Activated T-helper 2 cell treated with anti-CD3 and anti-CD28 coated beads, Interferon-gamma antibody, Interleukin-2, Interleukin-4, amounts not matched to agents 10 μg/mL and 5 μg/mL and 100 μg/mL, durations not matched to agents 14 hours and 24 hours and 36 hours (primary cell): ENCODE measurements at regions of chr12 and their contacts with region 1.

Region 1: DNA sequence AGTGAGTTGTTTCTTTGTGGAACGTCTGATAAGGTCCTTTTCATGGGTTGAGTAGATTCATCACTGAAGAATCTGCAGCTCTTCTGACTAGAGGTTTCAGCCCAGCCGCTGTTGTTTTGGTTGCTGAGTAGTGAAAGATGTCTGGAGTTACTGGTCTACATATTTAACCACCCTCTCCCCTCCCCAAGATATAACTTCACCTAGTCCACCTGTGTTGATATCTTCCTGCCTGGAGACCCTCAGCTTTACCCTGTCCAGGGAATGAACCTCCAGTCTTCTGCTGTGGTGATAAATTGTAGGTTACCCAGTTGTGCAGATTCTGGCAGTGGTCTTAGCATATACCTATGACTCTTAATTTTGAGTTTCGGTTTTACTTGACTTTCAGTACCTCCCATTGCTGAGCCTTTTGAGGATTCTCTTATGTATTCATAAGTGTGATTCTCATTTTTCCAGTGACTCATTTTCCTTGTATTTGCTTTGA is 62.9 kb downstream of the CCDC91 start:
- DNase-seq: peak; percentile 11
- H3K4me3 Mint-ChIP-seq: peak overlapping the region; percentile 59
- H3K27ac Mint-ChIP-seq: peak overlapping the region; percentile 92
- H3K4me1 Mint-ChIP-seq: peaks cover 41% of the 10 kb centered on the region
- H3K27me3 Mint-ChIP-seq: peaks cover 2% of the 10 kb centered on the region

Region 2: GRCh38 chr12:27861428-27862167 is 391.6 kb before region 1 on chr12:
- intact Hi-C with region 1: loop called (anchors 1 kb)
- DNase-seq: no peak
- H3K4me3 Mint-ChIP-seq: no peak overlapping the region
- H3K27ac Mint-ChIP-seq: no peak overlapping the region
- H3K4me1 Mint-ChIP-seq: peaks cover 21% of the 10 kb centered on the region
- H3K27me3 Mint-ChIP-seq: peaks cover 7% of the 10 kb centered on the region

Region 3: DNA sequence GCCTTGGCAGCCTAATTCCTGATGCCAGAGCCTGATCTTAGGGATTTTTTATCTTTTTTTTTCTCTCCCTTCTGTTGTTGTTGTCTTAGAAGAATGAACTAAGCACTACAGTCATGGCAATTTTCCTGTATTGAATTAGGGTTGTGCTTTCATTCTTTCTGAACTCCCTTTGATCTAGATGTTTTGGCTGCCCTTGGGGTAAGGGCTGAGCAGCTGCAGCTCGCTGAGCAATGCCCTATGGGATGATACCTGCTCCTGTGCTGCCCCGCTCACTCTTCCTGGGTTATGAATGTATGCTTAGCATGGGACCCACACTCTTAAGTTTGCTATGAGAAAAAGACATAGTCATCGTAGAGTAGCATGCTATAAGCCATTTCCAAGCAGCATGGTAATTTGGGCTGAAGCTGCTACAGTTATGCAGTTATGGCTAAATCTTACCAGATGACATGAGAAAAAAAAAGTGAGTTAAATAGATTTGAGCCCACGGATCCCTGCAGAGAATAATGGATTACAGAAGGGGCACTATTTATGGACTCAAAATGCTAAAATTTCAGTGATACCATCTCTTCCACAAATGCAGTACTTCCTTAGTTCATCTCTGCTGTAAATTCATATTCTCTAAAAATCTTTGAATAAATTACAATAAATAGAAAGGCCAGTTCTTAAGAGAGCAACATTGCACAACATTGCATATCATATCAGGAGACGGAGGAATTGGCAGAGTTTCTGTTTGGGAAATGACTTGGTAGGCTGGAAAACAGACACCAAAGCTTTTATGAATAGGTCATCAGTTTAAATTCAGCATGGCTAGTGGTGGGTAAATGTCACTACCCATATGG is 201.5 kb before region 1 on chr12:
- intact Hi-C with region 1: no loop called
- DNase-seq: no peak
- H3K4me3 Mint-ChIP-seq: no peak overlapping the region
- H3K27ac Mint-ChIP-seq: no peak overlapping the region
- H3K4me1 Mint-ChIP-seq: no peaks in the 10 kb centered on the region
- H3K27me3 Mint-ChIP-seq: no peaks in the 10 kb centered on the region

Region 4: GRCh38 chr12:28190321-28191050 is 62.7 kb before region 1 on chr12 and contains the start of gene CCDC91:
- intact Hi-C with region 1: loop called (anchors 1 kb)
- DNase-seq: peak; percentile 77
- H3K4me3 Mint-ChIP-seq: peak within 1 kb of the TSS; percentile 91
- H3K27ac Mint-ChIP-seq: peak within 1 kb of the TSS; percentile 96
- H3K4me1 Mint-ChIP-seq: peaks cover 30% of the 10 kb centered on the region
- H3K27me3 Mint-ChIP-seq: no peaks in the 10 kb centered on the region
- total RNA-seq, gene CCDC91: 13.1 and 13.7 TPM in 2 replicates

Region 5: DNA sequence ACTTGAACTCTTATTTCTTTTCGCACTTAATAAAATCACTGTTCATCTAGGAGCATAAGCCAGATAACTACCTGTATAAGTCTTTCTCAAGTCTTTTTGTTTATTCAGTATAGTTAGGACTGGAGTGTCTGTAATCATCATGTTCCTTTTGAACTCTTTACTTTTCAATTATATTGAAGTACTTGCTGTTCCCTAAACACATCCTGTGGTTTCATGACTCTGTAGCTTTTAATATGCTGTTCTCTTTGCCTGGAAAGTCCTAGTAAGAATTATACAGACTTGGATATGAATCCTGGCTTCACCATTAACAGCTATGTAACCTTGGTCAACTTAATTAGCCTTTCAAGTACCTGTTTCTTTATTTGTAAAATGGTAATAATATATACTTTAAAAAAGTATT is 25.3 kb after region 1 on chr12:
- intact Hi-C with region 1: no loop called
- DNase-seq: no peak
- H3K4me3 Mint-ChIP-seq: no peak overlapping the region
- H3K27ac Mint-ChIP-seq: no peak overlapping the region
- H3K4me1 Mint-ChIP-seq: no peaks in the 10 kb centered on the region
- H3K27me3 Mint-ChIP-seq: no peaks in the 10 kb centered on the region

Region 6: DNA sequence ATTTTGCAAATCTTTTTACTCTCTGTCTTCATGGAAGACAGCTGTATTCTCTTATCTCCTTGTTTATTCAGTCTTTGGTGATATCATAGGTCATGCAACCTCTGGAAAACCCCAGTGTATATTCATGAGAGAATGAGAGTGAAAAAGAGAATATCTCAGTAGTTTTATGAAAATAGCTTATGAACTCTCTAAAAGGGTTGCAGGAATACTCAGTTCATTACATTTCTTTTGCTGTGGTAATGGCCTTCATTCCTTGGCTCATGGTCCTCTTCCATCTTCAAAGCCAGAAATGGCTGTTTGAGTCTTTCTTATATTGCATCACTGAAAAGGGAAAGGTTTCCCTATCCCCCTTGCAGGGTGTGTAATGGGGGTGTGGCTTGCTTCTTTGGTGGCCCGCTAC is 87.1 kb after region 1 on chr12:
- intact Hi-C with region 1: loop called (anchors 5 kb)
- DNase-seq: no peak
- H3K4me3 Mint-ChIP-seq: no peak overlapping the region
- H3K27ac Mint-ChIP-seq: no peak overlapping the region
- H3K4me1 Mint-ChIP-seq: peaks cover 5% of the 10 kb centered on the region
- H3K27me3 Mint-ChIP-seq: no peaks in the 10 kb centered on the region

Region 7: DNA sequence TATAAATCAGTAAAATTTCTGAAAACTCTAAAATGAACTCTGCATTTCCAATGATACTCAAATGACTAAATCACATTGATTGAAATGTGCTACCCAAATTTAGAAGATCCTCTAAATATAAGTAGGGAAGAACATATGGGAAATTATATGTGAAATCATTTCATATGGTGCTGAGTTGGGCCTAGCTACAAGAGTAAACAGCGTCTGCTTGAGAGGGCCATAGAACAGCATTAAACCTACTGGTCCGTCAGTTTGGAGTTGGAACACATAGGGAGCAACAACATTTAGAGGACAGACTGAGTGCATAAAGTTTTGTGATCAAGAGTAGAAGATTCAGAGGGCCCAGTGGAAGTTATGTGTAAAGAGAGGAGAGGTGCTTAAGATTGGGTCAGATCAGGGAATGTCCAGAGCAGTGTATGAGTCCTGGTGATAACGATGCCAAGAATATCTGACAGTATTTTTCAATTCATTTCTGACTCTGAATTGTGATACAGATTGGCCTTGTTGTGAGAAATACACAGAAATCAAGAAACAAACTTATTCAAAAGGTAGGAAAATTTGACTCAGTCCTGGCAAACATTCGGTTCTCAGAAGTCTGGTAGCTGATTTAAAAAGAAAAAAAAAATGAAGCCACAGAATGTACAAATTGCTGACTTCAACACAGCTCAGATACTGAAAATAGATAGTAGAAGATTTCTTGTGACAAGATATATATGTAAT is 299.2 kb after region 1 on chr12:
- intact Hi-C with region 1: loop called (anchors 1 kb)
- DNase-seq: no peak
- H3K4me3 Mint-ChIP-seq: no peak overlapping the region
- H3K27ac Mint-ChIP-seq: peak overlapping the region; percentile 26
- H3K4me1 Mint-ChIP-seq: peaks cover 6% of the 10 kb centered on the region
- H3K27me3 Mint-ChIP-seq: peaks cover 1% of the 10 kb centered on the region